HEK293 (cell line): ENCODE measurements at regions of chr2 and their contacts with region 1.

Region 1: DNA sequence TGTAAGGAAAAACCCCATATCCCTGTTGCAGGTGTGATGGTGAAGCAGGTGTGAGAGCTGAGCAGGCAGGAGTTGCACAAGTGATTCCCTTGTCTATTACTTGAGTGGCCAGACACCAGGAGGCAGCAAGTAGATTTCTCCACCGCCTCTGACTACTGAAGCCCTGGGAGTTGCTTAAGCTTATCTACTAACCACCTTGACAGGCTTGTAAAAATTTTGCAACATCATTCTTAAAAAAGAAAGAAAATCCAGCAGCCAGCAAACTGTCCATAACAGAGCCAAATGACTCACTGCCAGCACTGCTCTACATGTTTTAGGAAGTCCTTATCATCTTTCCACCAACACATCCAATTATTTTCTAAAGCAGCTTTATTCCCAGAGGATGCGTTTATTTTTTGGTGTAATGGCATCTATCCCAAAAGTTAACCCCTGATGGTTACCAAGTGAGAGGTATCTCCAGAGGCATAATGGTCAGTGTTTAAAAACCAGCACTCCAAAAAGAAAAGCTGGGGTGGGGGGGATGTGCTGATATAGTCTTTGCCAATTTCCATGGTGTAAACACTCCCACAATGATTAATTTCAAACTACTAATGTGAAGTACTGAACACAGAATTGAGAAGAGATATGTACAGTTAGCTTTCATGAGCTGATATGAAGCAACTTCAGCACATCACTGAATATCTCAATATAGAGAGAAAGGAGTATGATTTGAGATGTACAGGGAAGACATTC is 16.3 kb upstream of the GPR39 start:
- H3K4me3 ChIP-seq: no peak overlapping the region
- H3K27ac ChIP-seq: no peak overlapping the region
- H3K4me1 ChIP-seq: no peaks in the 10 kb centered on the region
- CTCF ChIP-seq: no peak

Region 2: DNA sequence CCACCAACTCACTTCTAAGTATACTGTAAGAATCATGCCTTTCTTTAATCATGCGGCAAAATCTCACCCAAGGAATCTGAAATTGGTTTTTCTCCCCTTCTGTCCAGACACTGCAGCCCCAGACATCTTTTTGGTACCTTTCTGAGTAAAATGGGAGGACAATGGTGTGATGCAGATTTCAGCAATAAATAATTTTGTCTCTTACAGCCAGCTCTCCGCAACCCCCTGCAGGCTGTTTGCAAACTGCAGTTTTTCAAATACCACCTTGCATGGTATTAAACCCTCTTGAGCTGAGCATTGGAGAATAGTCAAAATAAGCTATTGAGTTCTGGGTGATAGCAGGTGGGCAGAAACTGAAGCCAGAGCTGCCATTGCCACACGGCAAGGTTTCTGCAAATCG is 48.4 kb after region 1 on chr2:
- CTCF ChIA-PET with region 1: interaction called, 12 read pairs
- POLR2A ChIA-PET with region 1: no interaction called
- H3K4me3 ChIP-seq: no peak overlapping the region
- H3K27ac ChIP-seq: no peak overlapping the region
- H3K4me1 ChIP-seq: no peaks in the 10 kb centered on the region
- CTCF ChIP-seq: no peak